Cardiac septum (tissue), 1 donor: ENCODE measurements at regions of chr10 and their contacts with region 1.

Region 1: GRCh38 chr10:84537447-84537931 is 209.1 kb downstream of the CCSER2 start:
- DNase-seq: no peak

Region 2: DNA sequence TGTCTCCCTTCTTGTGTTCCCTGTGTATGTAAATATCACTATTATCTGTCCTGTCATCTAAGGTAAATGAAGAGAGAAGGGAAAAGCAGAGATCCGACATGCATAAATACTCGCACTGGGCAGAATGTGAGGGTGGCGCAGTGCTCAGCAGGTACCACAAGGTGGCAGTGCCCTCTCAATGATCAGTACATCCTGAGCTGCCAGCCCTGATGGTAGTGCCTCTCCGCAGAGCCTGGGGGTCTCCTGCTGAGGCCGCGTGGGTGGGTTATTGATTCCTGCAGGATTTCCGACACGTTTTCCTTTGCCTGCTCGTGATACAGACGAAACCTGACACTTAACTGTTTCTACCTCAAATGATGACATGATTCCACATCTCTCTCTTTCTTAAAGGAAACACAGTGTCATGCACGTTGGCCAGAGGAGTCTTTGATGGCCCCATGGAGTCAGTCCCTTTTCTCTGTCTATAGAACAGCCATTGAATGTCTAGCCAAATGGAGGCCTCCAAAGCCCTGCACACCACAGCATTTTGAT is 272.8 kb before region 1 on chr10:
- intact Hi-C with region 1: loop called (anchors 1 kb)
- DNase-seq: no peak

Region 3: DNA sequence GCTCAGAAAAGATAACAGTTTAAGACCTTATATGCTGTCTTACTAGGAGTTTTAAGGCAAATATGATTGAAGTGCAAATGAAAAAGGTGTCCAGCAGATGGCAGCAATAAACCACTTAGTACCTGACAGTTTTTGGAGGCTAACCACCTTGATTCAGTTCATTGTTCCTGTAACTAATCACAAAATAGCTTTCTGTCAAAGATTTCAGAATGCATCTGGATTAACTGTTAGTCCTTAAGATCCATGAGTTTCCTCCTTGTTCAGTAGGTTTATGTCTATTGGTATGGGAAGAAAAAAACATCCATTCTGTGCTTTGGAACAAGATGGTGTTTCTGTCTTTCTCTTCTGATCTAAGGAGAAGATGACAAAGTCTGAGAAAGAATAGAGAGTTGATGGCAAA is 162.5 kb before region 1 on chr10:
- intact Hi-C with region 1: loop called (anchors 2 kb)
- DNase-seq: no peak

Region 4: DNA sequence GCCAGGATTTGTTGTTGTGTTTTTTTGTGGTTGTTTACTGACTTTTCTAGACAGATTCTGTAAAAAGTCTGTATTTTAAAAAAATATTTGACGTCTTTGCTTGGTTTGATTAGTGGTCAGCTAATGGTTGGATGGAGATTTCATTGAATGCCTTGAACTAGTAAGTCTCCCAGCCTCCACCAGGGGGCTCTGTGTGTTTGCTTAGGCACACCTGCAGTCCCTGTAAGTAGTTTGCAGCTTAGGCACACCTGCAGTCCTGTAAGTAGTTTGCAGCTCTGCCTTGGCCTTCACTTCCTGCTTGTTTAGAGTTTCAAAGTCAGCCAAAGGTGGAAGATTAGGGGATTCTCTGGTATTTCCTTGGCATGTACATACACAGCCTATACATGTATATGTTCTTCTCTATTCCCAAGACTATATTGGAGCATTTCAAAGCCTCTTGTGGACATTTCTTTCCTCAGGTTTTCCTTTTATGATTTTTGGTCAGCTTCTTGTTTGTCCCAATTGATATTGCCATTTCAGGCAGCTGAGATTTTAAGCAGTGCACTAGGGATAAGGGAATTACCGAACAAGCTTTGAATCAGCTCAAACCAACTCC is 107.5 kb before region 1 on chr10:
- intact Hi-C with region 1: loop called (anchors 5 kb)
- DNase-seq: no peak

Region 5: GRCh38 chr10:84613336-84614021 is 76.0 kb after region 1 on chr10:
- intact Hi-C with region 1: no loop called
- DNase-seq: no peak